ENCODE measurements at regions of chr5 and their contacts with region 1.

Region 1: GRCh38 chr5:94830520-94830919 is 212.1 kb downstream of the SLF1 start:
- DNase-seq: no peak
- H3K4me3 Mint-ChIP-seq: no peak overlapping the region
- H3K27ac Mint-ChIP-seq: no peak overlapping the region
- H3K4me1 Mint-ChIP-seq: no peaks in the 10 kb centered on the region
- H3K27me3 Mint-ChIP-seq: no peaks in the 10 kb centered on the region
- CTCF ChIP-seq: no peak

Region 2: DNA sequence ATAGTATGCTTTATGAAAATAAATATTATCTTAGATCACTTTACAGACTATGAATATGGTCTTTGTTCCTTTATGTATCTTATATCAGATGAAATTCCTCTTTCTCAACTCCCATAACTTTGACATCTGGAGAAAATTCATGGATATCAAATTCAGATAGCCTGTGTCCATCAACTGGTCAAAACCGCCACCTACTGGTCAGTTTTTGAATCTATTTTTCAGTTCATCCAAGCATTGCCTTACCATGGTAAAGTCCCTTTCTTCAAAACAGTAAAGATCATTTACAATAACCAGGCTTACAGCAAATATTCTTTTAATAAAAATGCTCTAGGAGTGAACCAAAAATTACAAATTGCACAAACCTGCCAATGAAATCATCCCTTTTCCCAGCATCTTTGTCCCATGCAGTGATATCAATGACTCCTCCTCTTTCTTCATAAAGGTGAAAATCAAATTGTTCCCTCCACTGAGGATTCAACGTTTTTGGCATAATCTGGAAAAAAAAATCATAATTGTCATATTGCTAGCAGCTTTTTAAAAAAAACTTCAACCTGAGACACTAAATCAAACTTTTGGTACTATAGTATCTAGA is 78.5 kb after region 1 on chr5:
- CTCF ChIA-PET with region 1: no interaction called
- intact Hi-C with region 1: loop called (anchors 2 kb)
- DNase-seq: peak; percentile 46
- H3K4me3 Mint-ChIP-seq: no peak overlapping the region
- H3K27ac Mint-ChIP-seq: no peak overlapping the region
- H3K4me1 Mint-ChIP-seq: no peaks in the 10 kb centered on the region
- H3K27me3 Mint-ChIP-seq: no peaks in the 10 kb centered on the region
- CTCF ChIP-seq: peak; percentile 64

Measured in Calu3 (cell line).